PC-3 (cell line): ENCODE measurements at regions of chr3 and their contacts with region 1.

Region 1: GRCh38 chr3:168442502-168442901 is 346.8 kb upstream of the GOLIM4 start:
- DNase-seq: no peak
- ATAC-seq: no peak
- H3K4me3 ChIP-seq: no peak overlapping the region
- H3K27ac ChIP-seq: no peak overlapping the region
- H3K4me1 ChIP-seq: no peaks in the 10 kb centered on the region
- H3K27me3 ChIP-seq: no peaks in the 10 kb centered on the region
- CTCF ChIP-seq: no peak

Region 2: DNA sequence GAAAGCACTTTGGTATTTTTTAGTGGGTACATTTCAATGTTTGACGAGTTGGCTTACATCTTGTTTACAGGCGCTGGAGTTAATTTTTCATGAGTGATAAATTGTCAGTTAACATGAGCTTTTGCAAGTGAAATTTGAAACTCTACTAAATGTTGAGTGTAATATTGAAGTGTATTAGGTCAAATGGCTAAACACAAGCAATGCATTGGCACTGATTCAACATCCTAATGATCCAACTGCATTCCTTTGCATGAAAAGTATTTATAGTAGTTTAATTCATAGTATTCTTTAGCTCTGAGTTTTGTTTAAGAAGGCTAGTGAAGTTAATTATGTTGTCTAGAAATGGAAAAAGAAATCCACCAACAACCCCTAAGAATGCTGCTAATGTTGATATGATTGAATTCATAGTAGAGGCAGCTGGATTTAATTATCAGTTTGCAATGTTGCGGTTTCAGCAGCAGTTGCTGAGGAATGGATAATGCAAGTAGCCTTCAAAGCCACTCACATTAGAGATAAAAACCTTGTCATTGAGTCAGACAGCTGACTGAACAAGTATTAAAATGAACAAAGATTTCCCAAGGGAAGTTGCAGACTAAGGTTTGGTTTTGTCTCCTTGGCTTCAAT is 101.2 kb before region 1 on chr3:
- CTCF ChIA-PET with region 1: no interaction called
- POLR2A ChIA-PET with region 1: no interaction called
- intact Hi-C with region 1: no loop called
- DNase-seq: peak; percentile 57
- ATAC-seq: 0 out of 2 replicates have a peak, but pooled peaks have one; percentile 2
- H3K4me3 ChIP-seq: peak overlapping the region; percentile 29
- H3K27ac ChIP-seq: peak overlapping the region; percentile 48
- H3K4me1 ChIP-seq: peaks cover 38% of the 10 kb centered on the region
- H3K27me3 ChIP-seq: no peaks in the 10 kb centered on the region
- CTCF ChIP-seq: no peak

Region 3: GRCh38 chr3:168398371-168399025 is 44.0 kb before region 1 on chr3:
- CTCF ChIA-PET with region 1: no interaction called
- POLR2A ChIA-PET with region 1: no interaction called
- intact Hi-C with region 1: loop called (anchors 5 kb)
- DNase-seq: peak; percentile 76
- ATAC-seq: peak; percentile 98
- H3K4me3 ChIP-seq: no peak overlapping the region
- H3K27ac ChIP-seq: no peak overlapping the region
- H3K4me1 ChIP-seq: peaks cover 9% of the 10 kb centered on the region; the same call in 1 of the 2 replicates
- H3K27me3 ChIP-seq: no peaks in the 10 kb centered on the region
- CTCF ChIP-seq: no peak